Astrocyte of the cerebellum (primary cell): ENCODE measurements at regions of chr1 and their contacts with region 1.

Region 1: GRCh38 chr1:93087532-93087931 is 8.4 kb downstream of the MTF2 start:
- DNase-seq: no peak
- H3K4me3 ChIP-seq: no peak overlapping the region
- CTCF ChIP-seq: no peak

Region 2: DNA sequence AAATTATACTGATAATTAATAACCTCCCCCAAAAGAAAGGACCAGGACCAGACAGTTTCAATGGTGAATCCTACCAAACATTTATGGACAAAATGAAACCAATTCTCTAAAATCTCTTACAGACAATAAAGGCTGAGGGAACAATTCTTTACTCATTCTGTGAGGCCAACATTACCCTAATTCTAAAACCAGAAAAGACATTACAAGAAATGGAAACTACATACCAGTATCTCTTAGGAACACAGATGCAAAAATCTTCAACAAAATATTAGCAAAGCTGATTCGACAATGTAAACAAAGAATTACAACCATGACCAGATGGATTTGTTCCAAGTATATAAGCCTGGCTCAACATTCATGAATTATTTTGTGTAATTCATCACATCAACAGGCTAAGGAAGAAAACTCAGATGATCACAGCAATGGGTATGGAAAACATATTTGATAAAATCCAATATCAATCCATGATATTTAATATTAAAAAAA is 84.1 kb after region 1 on chr1:
- in situ Hi-C with region 1: loop called (anchors 5 kb)
- DNase-seq: no peak
- H3K4me3 ChIP-seq: no peak overlapping the region
- CTCF ChIP-seq: no peak